ENCODE measurements at regions of chr20 and their contacts with region 1.

Region 1: DNA sequence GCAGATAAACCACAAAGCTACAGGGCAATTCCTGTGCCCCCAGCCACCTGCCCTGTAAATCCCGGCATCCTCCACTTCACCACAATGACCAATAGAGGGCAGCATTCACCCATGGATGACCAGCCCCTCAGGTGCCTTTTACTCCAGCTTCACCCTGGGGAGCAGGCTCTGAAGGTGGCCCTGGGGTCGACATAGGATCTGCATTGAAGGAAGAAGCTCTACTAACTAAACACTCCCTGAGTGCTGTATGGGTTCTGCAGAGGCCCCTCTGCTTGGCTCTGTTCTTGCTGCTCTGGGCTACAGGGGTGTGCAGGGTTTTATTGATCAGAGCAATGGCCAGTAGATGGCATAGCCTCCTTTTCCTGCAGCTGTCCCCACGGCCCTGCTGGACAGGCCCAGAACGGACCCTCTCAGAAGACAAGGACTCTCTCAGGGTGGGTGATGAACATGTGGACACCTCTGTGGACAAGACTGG is 20.3 kb downstream of the CST4 start:
- DNase-seq: peak in 1 of 2 donors; percentile 56
- ATAC-seq: peak; percentile 85 to 87
- H3K4me3 ChIP-seq: no peak overlapping the region
- H3K27ac ChIP-seq: no peak overlapping the region
- H3K4me1 ChIP-seq: no peaks in the 10 kb centered on the region
- H3K27me3 ChIP-seq: no peaks in the 10 kb centered on the region
- CTCF ChIP-seq: peak; percentile 70 to 89 (median 84)
- POLR2A ChIP-seq: no peak

Region 2: GRCh38 chr20:23988561-23988960 is 320.0 kb after region 1 on chr20 and contains the start of gene GGTLC1:
- in situ Hi-C with region 1: loop called in 1 of 4 experiments (anchors 10 kb)
- intact Hi-C with region 1: loop called (anchors 2 kb)
- DNase-seq: no peak
- ATAC-seq: no peak
- H3K4me3 ChIP-seq: no peak within 1 kb of the TSS
- H3K27ac ChIP-seq: no peak within 1 kb of the TSS
- H3K4me1 ChIP-seq: no peaks in the 10 kb centered on the region
- H3K27me3 ChIP-seq: no peaks in the 10 kb centered on the region
- CTCF ChIP-seq: no peak
- POLR2A ChIP-seq: no peak
- total RNA-seq, gene GGTLC1: not detected

Region 3: DNA sequence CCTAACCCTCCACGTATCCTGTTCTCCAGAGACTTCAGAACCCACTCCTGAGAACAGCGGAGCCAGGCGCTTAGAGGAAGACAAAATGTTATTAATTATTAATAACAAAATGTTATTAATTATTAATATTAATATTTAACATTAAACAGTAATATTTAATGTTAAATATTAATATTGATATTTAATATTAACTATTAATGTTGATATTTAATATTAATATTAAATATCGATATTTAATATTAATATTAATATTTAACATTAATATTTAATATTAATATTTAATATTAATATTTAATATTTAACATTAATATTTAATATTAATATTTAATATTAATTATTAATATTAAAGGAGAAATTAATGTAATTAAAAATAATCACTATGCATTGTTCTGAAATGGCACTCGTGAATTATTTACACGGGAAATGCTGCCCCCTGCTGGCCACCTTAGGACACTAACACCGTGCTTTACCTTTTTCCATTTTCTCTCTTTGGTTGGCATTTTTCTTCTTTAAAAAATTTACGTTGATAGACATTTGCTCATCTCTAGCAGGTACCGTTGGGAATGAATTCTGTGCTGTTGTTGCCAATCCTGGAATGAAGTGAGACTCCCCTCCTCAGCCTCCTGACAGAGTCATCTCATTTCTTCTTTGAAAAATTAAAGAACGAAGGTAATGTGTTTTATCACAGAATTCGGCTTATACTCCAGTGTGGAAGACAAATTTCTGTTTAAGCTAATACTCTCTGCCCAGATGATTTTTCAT is 327.6 kb after region 1 on chr20:
- in situ Hi-C with region 1: loop called (anchors 5 to 10 kb)
- intact Hi-C with region 1: loop called (anchors 1 kb)
- DNase-seq: no peak
- ATAC-seq: no peak
- H3K4me3 ChIP-seq: no peak overlapping the region
- H3K27ac ChIP-seq: no peak overlapping the region
- H3K4me1 ChIP-seq: no peaks in the 10 kb centered on the region
- H3K27me3 ChIP-seq: peaks cover 0 to 6% (median 0%) of the 10 kb centered on the region in 3 donors
- CTCF ChIP-seq: peak; percentile 40 to 84 (median 67)
- POLR2A ChIP-seq: no peak